Activated CD4-positive, alpha-beta T cell treated with anti-CD3 and anti-CD28 coated beads for 36 hours (primary cell): ENCODE measurements at regions of chr13 and their contacts with region 1.

Region 1: GRCh38 chr13:48892053-48892690 is 83.5 kb upstream of the FNDC3A start:
- DNase-seq: no peak
- ATAC-seq: peak; percentile 97
- H3K4me3 Mint-ChIP-seq: no peak overlapping the region
- H3K27ac Mint-ChIP-seq: peak overlapping the region; percentile 51
- H3K4me1 Mint-ChIP-seq: peaks cover 34% of the 10 kb centered on the region
- H3K27me3 Mint-ChIP-seq: peaks cover 7% of the 10 kb centered on the region

Region 2: DNA sequence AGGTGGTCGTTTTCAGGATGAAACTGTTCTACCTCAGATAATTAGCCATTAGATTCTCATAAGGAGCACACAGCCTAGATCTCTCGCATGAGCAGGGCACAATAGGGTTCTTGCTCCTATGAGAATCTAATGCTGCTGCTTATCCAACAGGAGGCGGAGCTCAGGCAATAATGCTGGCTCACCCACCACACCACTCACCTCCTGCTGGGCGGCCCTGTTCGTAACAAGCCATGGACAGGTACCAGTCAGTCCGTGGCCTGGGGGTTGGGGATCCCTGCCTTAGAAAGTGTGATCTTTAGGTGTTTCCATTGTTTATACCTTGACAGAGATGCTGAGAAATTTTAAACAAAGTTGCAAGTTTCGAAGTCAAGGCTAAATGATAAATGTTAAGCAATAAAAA is 1650.7 kb before region 1 on chr13:
- CTCF ChIA-PET with region 1: no interaction called
- POLR2A ChIA-PET with region 1: no interaction called
- intact Hi-C with region 1: no loop called
- DNase-seq: no peak
- ATAC-seq: no peak
- H3K4me3 Mint-ChIP-seq: no peak overlapping the region
- H3K27ac Mint-ChIP-seq: no peak overlapping the region
- H3K4me1 Mint-ChIP-seq: no peaks in the 10 kb centered on the region
- H3K27me3 Mint-ChIP-seq: peaks cover 2% of the 10 kb centered on the region

Region 3: GRCh38 chr13:48804821-48805601 is 87.2 kb before region 1 on chr13:
- CTCF ChIA-PET with region 1: no interaction called
- POLR2A ChIA-PET with region 1: no interaction called
- intact Hi-C with region 1: loop called in 1 of 2 experiments (anchors 1 kb)
- DNase-seq: peak; percentile 17
- ATAC-seq: peak; percentile 82
- H3K4me3 Mint-ChIP-seq: no peak overlapping the region
- H3K27ac Mint-ChIP-seq: peak overlapping the region; percentile 47
- H3K4me1 Mint-ChIP-seq: peaks cover 31% of the 10 kb centered on the region
- H3K27me3 Mint-ChIP-seq: peaks cover 5% of the 10 kb centered on the region

Region 4: DNA sequence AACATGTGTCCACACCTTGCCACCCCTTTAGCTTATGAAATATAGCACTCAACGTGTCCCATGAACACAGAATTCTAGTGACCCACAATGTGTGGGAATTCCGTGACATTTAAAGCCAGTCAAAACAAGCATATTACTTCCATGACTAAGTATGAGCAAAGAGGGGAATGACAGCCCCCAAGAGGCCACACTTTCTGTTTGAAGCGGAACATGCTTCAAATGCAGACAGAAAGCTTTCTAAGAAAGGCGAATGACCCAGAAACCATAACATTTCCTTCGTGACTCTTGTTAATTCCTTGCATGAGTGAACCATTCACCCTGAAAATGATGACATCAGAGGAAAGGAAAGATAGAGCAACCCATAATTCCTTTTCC is 38.5 kb before region 1 on chr13:
- CTCF ChIA-PET with region 1: no interaction called
- POLR2A ChIA-PET with region 1: no interaction called
- intact Hi-C with region 1: loop called in 1 of 2 experiments (anchors 1 kb)
- DNase-seq: peak; percentile 50
- ATAC-seq: peak; percentile 82
- H3K4me3 Mint-ChIP-seq: no peak overlapping the region
- H3K27ac Mint-ChIP-seq: no peak overlapping the region
- H3K4me1 Mint-ChIP-seq: peaks cover 45% of the 10 kb centered on the region
- H3K27me3 Mint-ChIP-seq: peaks cover 9% of the 10 kb centered on the region

Region 5: GRCh38 chr13:48879432-48879831 is 12.7 kb before region 1 on chr13:
- CTCF ChIA-PET with region 1: interaction called, 3 read pairs
- POLR2A ChIA-PET with region 1: interaction called, 3 read pairs
- intact Hi-C with region 1: loop called (anchors 1 kb)
- DNase-seq: no peak
- ATAC-seq: no peak
- H3K4me3 Mint-ChIP-seq: no peak overlapping the region
- H3K27ac Mint-ChIP-seq: no peak overlapping the region
- H3K4me1 Mint-ChIP-seq: peaks cover 46% of the 10 kb centered on the region
- H3K27me3 Mint-ChIP-seq: peaks cover 6% of the 10 kb centered on the region

Region 6: DNA sequence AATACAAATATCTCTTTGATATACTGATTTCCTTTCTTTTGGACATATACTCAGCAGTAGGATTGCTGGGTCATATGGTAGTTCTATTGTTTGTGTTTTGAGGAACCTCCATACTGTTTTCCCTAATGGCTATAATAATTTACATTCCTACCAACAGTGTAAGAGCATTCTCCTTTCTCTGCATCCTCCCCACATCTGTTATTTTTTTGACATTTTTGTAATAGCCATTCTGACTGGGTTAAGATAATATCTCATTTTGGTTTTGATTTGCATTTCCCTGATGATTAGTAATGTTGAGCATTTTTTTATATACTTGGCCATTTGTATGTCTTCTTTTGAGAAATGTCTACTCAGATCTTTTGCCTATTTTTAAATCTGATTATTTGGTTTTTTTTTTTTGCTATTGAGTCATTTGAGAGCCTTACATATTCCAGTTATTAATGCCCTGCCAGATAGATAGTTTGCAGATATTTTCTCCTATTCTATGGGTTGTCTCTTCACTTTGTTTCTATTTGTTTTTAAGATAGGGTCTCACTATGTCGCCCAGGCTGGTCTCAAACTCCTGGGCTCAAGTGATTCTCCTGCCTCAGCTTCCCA is 179.3 kb after region 1 on chr13:
- CTCF ChIA-PET with region 1: no interaction called
- POLR2A ChIA-PET with region 1: no interaction called
- intact Hi-C with region 1: no loop called
- DNase-seq: no peak
- ATAC-seq: no peak
- H3K4me3 Mint-ChIP-seq: no peak overlapping the region
- H3K27ac Mint-ChIP-seq: no peak overlapping the region
- H3K4me1 Mint-ChIP-seq: peaks cover 8% of the 10 kb centered on the region
- H3K27me3 Mint-ChIP-seq: no peaks in the 10 kb centered on the region